ENCODE measurements at regions of chr15 and their contacts with region 1.

Region 1: DNA sequence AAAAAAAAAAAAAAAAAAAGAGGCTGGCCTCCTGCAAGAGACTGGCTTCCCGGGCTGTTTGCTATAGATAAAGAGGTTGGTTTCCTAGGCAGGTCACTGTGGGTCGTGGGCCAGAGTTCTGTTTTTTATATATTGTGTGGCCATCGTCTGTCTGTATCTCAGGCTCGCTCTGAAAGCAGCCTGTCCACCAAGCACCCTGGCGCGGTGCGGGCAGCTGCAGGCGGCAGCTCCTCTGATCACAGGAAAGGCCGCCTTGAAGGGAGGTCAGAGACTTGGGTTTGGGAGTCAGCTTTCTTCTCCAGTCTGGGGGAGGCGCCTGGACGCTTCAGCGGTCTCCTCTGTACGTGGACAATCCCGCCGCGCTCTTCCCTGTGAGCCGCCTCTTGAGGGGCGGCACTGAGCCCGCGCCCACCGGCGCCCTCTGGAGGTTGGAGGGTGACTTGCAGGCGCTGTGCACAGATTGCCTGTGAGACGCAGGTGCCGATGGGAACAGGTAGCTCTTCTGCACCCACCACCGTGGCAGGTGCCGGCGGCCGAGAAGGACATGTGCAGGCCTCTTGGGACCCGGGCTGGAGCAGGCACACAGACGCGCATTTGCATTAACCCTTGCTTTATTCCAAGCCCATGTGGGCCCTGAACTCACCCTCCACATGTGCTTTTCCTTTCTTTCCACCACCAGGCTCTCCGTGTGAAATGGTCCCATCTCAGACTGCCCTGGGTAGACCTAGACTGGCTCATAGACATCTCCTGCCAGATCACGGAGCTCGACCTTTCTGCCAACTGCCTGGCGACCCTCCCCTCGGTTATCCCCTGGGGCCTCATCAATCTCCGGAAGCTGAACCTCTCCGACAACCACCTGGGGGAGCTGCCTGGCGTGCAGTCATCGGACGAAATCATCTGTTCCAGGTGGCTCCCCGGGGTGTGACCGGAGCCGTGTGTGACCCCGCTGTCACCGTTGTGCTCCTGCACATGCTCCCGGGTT is 89.3 kb downstream of the LRRK1 start:
- DNase-seq: peak; percentile 75 to 89
- H3K4me3 ChIP-seq: peak overlapping the region; percentile 30 to 67 (median 55)
- H3K27ac ChIP-seq: peak overlapping the region; percentile 23 to 55
- H3K4me1 ChIP-seq: no peaks in the 10 kb centered on the region
- H3K27me3 ChIP-seq: no peaks in the 10 kb centered on the region
- CTCF ChIP-seq: peak; percentile 85 to 93 (median 90)
- POLR2A ChIP-seq: no peak

Region 2: DNA sequence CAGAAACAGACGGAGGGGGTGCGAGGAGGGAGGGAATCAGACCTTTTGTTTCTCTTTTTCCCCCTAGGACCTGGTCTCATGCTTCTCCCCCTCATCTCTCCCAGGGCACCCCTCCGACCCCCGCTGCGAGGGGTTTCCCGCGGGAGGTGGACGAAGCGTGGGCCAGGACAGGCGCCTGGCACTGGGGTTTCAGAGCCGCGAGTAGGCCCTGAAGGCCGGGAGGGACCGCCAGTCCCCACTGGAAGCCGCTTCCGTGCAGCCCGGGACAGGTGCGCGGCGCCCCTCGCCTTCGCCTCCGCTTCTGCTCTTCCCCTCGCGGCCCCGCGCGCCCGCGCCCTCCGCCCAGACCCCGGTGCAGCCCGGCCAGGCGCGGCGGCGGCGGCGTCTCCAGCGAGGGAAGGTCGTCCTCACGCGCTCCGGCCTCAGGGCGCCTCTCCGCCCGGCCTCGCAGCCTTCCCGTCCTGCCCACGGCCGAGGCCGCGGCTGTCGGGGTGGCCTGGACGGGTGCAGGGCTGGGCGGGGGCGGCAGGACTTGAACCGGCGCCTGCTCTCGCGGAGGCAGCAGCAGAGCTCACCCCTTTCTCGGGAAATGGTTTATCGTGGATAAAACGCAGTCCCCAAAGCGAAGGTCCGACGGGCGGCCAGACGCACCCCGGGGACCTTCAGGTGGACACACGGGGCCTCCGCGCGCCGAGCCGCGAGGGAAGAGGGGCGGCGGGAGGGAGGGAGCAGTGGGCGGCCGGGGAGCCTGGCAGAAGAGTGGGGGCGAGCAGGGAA is 635.1 kb before region 1 on chr15:
- intact Hi-C with region 1: no loop called
- DNase-seq: no peak
- H3K4me3 ChIP-seq: peak overlapping the region; percentile 57 to 75 (median 58)
- H3K27ac ChIP-seq: peak overlapping the region; percentile 64 to 73
- H3K4me1 ChIP-seq: no peaks in the 10 kb centered on the region
- H3K27me3 ChIP-seq: peaks cover 0 to 5% of the 10 kb centered on the region in 2 donors
- CTCF ChIP-seq: no peak
- POLR2A ChIP-seq: no peak

Region 3: GRCh38 chr15:100635406-100636071 is 372.9 kb before region 1 on chr15:
- intact Hi-C with region 1: loop called (anchors 10 kb)
- DNase-seq: no peak
- H3K4me3 ChIP-seq: no peak overlapping the region
- H3K27ac ChIP-seq: no peak overlapping the region
- H3K4me1 ChIP-seq: no peaks in the 10 kb centered on the region
- H3K27me3 ChIP-seq: no peaks in the 10 kb centered on the region
- CTCF ChIP-seq: no peak
- POLR2A ChIP-seq: no peak

Region 4: GRCh38 chr15:100918034-100918689 is 90.3 kb before region 1 on chr15:
- intact Hi-C with region 1: loop called (anchors 2 kb)
- DNase-seq: peak; percentile 67 to 76
- H3K4me3 ChIP-seq: peak overlapping the region; percentile 75 to 96 (median 82)
- H3K27ac ChIP-seq: peak overlapping the region; percentile 77 to 85
- H3K4me1 ChIP-seq: peaks cover 0 to 5% of the 10 kb centered on the region in 2 donors
- H3K27me3 ChIP-seq: no peaks in the 10 kb centered on the region
- CTCF ChIP-seq: peak; percentile 75 to 92 (median 88)
- POLR2A ChIP-seq: no peak